CD4-positive, alpha-beta T cell (primary cell): ENCODE measurements at regions of chr17 and their contacts with region 1.

Region 1: GRCh38 chr17:73231841-73232586 is 29.7 kb downstream of the CPSF4L start:
- DNase-seq: peak; percentile 92 to 97 (median 96)
- ATAC-seq: peak; percentile 94
- H3K4me3 ChIP-seq: peak overlapping the region; percentile 99
- H3K4me3 Mint-ChIP-seq: peak overlapping the region; percentile 97
- H3K27ac ChIP-seq: peak overlapping the region; percentile 64 to 72
- H3K27ac Mint-ChIP-seq: peak overlapping the region; percentile 96
- H3K4me1 ChIP-seq: peaks cover 43% of the 10 kb centered on the region
- H3K4me1 Mint-ChIP-seq: peaks cover 80% of the 10 kb centered on the region
- H3K27me3 ChIP-seq: no peaks in the 10 kb centered on the region
- H3K27me3 Mint-ChIP-seq: no peaks in the 10 kb centered on the region
- CTCF ChIP-seq: no peak

Region 2: GRCh38 chr17:73192894-73193701 is 38.9 kb before region 1 on chr17 and contains the start of gene COG1:
- CTCF ChIA-PET with region 1: interaction called, 17 read pairs
- POLR2A ChIA-PET with region 1: interaction called, 38 read pairs
- intact Hi-C with region 1: loop called (anchors 1 kb)
- DNase-seq: peak; percentile 63 to 95 (median 84)
- ATAC-seq: peak; percentile 84
- H3K4me3 ChIP-seq: peak within 1 kb of the TSS; percentile 89
- H3K4me3 Mint-ChIP-seq: peak within 1 kb of the TSS; percentile 99
- H3K27ac ChIP-seq: peak within 1 kb of the TSS; percentile 60 to 75
- H3K27ac Mint-ChIP-seq: peak within 1 kb of the TSS; percentile 89
- H3K4me1 ChIP-seq: peaks cover 28% of the 10 kb centered on the region
- H3K4me1 Mint-ChIP-seq: peaks cover 33% of the 10 kb centered on the region
- H3K27me3 ChIP-seq: no peaks in the 10 kb centered on the region
- H3K27me3 Mint-ChIP-seq: no peaks in the 10 kb centered on the region
- CTCF ChIP-seq: no peak
- total RNA-seq, gene COG1: 83.0 to 86.2 TPM

Region 3: DNA sequence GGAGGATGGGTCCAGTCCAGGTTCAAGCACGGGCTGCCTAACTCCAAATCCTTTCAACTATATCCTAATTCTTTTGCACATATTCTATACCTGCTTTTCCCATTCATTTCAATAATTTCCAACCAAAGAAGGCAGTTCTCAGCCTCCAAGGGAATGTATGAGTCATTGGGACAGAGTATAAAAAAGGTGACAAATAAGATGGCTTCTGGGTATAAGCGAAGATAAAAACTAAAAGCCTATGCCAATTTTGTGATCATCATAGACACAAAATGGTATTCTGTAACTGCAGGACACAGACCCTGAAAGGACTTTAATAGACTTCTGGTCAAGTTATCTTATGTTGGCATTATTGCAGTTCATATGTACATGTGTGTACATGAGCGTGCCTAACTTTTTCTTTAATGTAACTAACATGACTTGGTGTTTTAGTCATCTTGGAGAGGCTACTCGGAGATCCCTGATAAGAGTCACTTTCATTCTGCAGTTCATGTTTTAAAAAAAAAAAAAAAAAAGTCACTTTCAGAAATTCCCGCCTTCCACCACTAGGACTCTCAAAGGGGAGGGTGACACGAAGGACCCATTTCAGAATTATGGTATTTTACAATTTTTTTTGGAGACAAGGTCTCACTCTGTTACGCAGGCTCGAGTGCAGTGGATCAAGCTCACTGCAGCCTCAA is 21.9 kb before region 1 on chr17:
- CTCF ChIA-PET with region 1: interaction called, 4 read pairs
- POLR2A ChIA-PET with region 1: interaction called, 39 read pairs
- intact Hi-C with region 1: loop called in 1 of 2 experiments (anchors 1 kb)
- DNase-seq: peak in 2 of 14 experiments; percentile 48 to 50
- ATAC-seq: peak; percentile 37
- H3K4me3 ChIP-seq: no peak overlapping the region
- H3K4me3 Mint-ChIP-seq: peak overlapping the region; percentile 20
- H3K27ac ChIP-seq: peak overlapping the region in 1 of 2 donors; percentile 0
- H3K27ac Mint-ChIP-seq: peak overlapping the region; percentile 86
- H3K4me1 ChIP-seq: peaks cover 19% of the 10 kb centered on the region
- H3K4me1 Mint-ChIP-seq: peaks cover 39% of the 10 kb centered on the region
- H3K27me3 ChIP-seq: no peaks in the 10 kb centered on the region
- H3K27me3 Mint-ChIP-seq: no peaks in the 10 kb centered on the region
- CTCF ChIP-seq: no peak

Region 4: GRCh38 chr17:73311781-73312641 is 80.0 kb after region 1 on chr17 and contains the start of gene CDC42EP4:
- CTCF ChIA-PET with region 1: interaction called, 4 read pairs
- POLR2A ChIA-PET with region 1: interaction called, 9 read pairs
- intact Hi-C with region 1: loop called in 1 of 2 experiments (anchors 5 kb)
- DNase-seq: peak; percentile 70 to 92 (median 82)
- ATAC-seq: peak; percentile 90
- H3K4me3 ChIP-seq: peak within 1 kb of the TSS; percentile 62
- H3K4me3 Mint-ChIP-seq: peak within 1 kb of the TSS; percentile 92
- H3K27ac ChIP-seq: peak within 1 kb of the TSS; percentile 33 to 56
- H3K27ac Mint-ChIP-seq: peak within 1 kb of the TSS; percentile 47
- H3K4me1 ChIP-seq: peaks cover 30% of the 10 kb centered on the region
- H3K4me1 Mint-ChIP-seq: peaks cover 8% of the 10 kb centered on the region
- H3K27me3 ChIP-seq: no peaks in the 10 kb centered on the region
- H3K27me3 Mint-ChIP-seq: no peaks in the 10 kb centered on the region
- CTCF ChIP-seq: no peak
- total RNA-seq, gene CDC42EP4: 2.9 to 3.5 TPM

Region 5: DNA sequence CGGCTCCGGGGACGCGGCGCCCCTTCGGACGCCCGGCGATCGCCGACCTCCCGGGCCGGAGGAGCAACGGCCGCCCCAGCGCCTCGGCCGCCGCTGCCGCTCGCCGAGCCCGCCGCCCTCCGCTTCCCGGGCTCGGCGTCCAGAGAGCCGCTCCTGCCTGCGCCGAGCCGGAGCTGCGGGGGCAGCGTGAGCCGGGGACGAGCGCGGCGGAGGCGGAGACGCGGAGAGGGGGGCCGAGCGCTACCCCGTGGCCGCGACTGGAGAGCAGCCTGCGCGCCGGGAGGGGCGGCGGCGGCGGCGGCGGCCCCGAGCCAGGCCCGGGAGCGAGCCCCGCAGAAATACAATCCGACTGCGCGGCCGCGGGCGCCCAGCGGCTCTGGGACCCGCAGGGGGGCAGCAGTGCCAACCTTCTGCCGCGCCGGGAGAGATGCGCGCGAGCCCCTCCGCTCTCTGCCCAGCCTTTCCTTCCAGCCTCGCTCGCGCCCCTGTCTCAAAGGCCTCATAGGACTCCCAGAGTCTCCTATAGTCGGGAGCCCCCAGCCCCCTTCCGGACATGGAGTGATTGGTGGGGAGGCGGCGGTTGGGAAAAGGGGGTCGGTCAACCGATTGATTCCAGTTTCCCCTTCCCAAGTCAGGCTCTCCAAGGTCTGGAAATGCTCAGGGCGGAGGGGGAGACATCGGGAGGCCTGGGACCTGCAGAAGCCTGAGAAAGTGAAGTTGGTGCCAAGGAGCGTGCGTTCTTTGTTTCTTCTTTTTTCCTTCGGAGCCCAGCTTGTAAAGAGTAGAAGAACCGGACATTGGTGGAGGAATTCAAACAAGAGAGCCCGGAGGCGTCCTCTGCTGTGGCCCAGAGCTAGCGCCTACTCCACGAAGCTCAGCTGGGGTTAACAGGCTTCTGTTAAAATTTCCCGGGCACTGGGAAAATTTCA is 413.3 kb after region 1 on chr17:
- CTCF ChIA-PET with region 1: no interaction called
- POLR2A ChIA-PET with region 1: no interaction called
- intact Hi-C with region 1: no loop called
- DNase-seq: peak in 11 of 14 experiments; percentile 13 to 72 (median 48)
- ATAC-seq: peak; percentile 57
- H3K4me3 ChIP-seq: no peak overlapping the region
- H3K4me3 Mint-ChIP-seq: peak overlapping the region; percentile 90
- H3K27ac ChIP-seq: no peak overlapping the region
- H3K27ac Mint-ChIP-seq: no peak overlapping the region
- H3K4me1 ChIP-seq: peaks cover 29% of the 10 kb centered on the region
- H3K4me1 Mint-ChIP-seq: peaks cover 22% of the 10 kb centered on the region
- H3K27me3 ChIP-seq: peaks cover 13 to 32% of the 10 kb centered on the region in 2 experiments
- H3K27me3 Mint-ChIP-seq: peaks cover 7% of the 10 kb centered on the region
- CTCF ChIP-seq: peak; percentile 14